Sigmoid colon (tissue), 7 donors: ENCODE measurements at regions of chr1 and their contacts with region 1.

Region 1: GRCh38 chr1:235050911-235051360 is 77.7 kb downstream of the TOMM20 start:
- DNase-seq: no peak
- H3K4me3 ChIP-seq: no peak overlapping the region
- H3K27ac ChIP-seq: peak overlapping the region in 1 of 4 donors; percentile 89
- H3K4me1 ChIP-seq: peaks cover 0 to 44% (median 36%) of the 10 kb centered on the region in 4 donors
- H3K27me3 ChIP-seq: no peaks in the 10 kb centered on the region
- CTCF ChIP-seq: no peak
- EP300 ChIP-seq: peak in 1 of 4 donors; percentile 43
- POLR2A ChIP-seq: no peak

Region 2: DNA sequence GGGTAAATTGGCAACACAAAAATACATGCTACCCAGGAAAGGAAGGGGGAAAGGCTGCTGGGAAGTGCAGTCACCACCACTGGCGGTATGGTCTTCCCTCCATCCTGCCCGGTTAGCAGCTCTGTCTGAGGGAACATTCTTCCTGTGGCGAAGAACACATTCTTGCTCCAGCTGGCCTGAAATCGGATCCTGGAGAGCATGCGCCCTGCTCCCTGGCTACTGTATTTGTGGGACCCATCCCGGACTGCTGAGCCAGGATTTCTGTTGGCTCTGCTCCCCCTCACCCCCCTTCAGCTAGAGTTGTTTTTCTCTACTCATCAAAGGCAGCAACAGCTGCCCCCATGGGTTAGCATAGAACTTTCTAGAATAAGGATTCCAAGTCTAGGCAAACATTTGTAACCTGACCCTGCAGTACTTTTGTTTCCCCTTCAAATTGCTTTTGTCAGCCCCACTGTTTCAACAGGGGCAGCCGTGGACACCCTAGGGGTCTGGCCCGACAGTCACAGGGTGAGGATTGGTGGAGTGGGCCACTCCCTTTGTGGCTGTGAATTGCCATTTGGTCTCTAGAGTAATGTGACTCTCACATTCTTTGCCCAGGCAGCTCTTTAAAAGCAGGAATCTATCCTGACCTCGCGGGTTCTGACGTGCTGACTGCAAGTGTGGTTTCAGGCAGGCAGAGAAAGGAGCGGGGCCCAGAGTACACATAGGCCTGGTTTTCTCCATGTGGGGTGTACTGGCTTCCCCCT is 80.0 kb before region 1 on chr1:
- intact Hi-C with region 1: loop called (anchors 5 kb)
- DNase-seq: peak; percentile 95
- H3K4me3 ChIP-seq: peak overlapping the region in 2 of 4 donors; percentile 43 to 44
- H3K27ac ChIP-seq: peak overlapping the region; percentile 75 to 90 (median 81)
- H3K4me1 ChIP-seq: peaks cover 0 to 65% (median 61%) of the 10 kb centered on the region in 4 donors
- H3K27me3 ChIP-seq: no peaks in the 10 kb centered on the region
- CTCF ChIP-seq: no peak
- EP300 ChIP-seq: peak in 1 of 4 donors; percentile 0
- POLR2A ChIP-seq: peak in 1 of 2 donors; percentile 18

Region 3: GRCh38 chr1:235006132-235006943 is 44.6 kb before region 1 on chr1:
- intact Hi-C with region 1: loop called (anchors 2 kb)
- DNase-seq: peak; percentile 39
- H3K4me3 ChIP-seq: no peak overlapping the region
- H3K27ac ChIP-seq: no peak overlapping the region
- H3K4me1 ChIP-seq: no peaks in the 10 kb centered on the region
- H3K27me3 ChIP-seq: no peaks in the 10 kb centered on the region
- CTCF ChIP-seq: no peak
- EP300 ChIP-seq: no peak
- POLR2A ChIP-seq: no peak